Gastrocnemius medialis (tissue), 4 donors: ENCODE measurements at regions of chr3 and their contacts with region 1.

Region 1: GRCh38 chr3:53303957-53304356 is 43.4 kb downstream of the DCP1A start:
- DNase-seq: no peak
- ATAC-seq: no peak
- H3K4me3 ChIP-seq: no peak overlapping the region
- H3K27ac ChIP-seq: peak overlapping the region; percentile 71 to 81 (median 76)
- H3K4me1 ChIP-seq: peaks cover 10 to 19% of the 10 kb centered on the region in 2 donors
- H3K27me3 ChIP-seq: no peaks in the 10 kb centered on the region
- CTCF ChIP-seq: no peak
- POLR2A ChIP-seq: no peak

Region 2: DNA sequence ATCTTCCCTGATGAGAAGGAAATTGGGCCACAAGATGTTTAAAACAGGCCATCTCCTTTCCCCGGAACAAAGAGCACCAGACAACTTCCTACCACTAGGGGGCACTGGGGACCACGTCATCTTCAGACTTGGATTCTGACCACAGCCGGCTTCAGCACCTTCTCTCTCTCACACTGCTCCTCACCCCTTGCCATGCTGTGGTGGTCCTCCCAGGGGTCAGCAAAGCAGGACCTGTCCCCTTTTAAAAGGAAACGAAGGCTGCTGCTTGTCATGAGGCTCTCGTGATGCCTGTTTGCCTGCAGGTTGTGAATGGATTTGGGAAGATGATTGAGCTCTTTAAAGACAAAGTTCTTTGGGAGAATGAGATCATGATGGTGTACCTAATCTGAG is 190.0 kb before region 1 on chr3:
- in situ Hi-C with region 1: no loop called
- intact Hi-C with region 1: loop called (anchors 5 kb)
- DNase-seq: peak; percentile 65 to 73
- ATAC-seq: peak; percentile 89 to 90
- H3K4me3 ChIP-seq: no peak overlapping the region
- H3K27ac ChIP-seq: peak overlapping the region; percentile 62 to 76 (median 72)
- H3K4me1 ChIP-seq: peaks cover 26 to 31% of the 10 kb centered on the region in 2 donors
- H3K27me3 ChIP-seq: no peaks in the 10 kb centered on the region
- CTCF ChIP-seq: peak; percentile 86 to 94 (median 93)
- POLR2A ChIP-seq: no peak

Region 3: DNA sequence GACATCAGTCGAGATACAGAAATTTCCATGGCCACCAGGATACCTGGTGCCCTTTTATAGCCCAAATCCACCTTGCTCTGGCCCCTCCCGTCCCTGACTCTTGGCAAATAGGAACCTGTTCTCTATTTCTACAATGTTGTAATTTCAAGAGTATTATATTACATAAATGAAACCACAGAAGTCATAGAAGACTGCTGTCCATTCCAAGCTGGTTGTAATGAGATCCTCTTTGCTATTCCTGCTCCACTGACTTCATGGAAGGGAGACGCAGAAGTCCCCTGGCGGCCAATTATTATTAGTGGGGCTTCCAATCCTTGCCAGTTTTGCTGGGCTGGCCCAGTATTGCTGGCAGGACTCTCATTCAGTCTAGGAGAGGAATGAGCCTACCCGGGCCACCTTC is 16.7 kb after region 1 on chr3:
- in situ Hi-C with region 1: no loop called
- intact Hi-C with region 1: loop called (anchors 2 kb)
- DNase-seq: peak; percentile 48 to 85
- ATAC-seq: peak; percentile 99
- H3K4me3 ChIP-seq: no peak overlapping the region
- H3K27ac ChIP-seq: peak overlapping the region; percentile 81 to 86 (median 82)
- H3K4me1 ChIP-seq: peaks cover 50 to 60% of the 10 kb centered on the region in 2 donors
- H3K27me3 ChIP-seq: no peaks in the 10 kb centered on the region
- CTCF ChIP-seq: peak; percentile 51 to 63 (median 58)
- POLR2A ChIP-seq: no peak

Region 4: DNA sequence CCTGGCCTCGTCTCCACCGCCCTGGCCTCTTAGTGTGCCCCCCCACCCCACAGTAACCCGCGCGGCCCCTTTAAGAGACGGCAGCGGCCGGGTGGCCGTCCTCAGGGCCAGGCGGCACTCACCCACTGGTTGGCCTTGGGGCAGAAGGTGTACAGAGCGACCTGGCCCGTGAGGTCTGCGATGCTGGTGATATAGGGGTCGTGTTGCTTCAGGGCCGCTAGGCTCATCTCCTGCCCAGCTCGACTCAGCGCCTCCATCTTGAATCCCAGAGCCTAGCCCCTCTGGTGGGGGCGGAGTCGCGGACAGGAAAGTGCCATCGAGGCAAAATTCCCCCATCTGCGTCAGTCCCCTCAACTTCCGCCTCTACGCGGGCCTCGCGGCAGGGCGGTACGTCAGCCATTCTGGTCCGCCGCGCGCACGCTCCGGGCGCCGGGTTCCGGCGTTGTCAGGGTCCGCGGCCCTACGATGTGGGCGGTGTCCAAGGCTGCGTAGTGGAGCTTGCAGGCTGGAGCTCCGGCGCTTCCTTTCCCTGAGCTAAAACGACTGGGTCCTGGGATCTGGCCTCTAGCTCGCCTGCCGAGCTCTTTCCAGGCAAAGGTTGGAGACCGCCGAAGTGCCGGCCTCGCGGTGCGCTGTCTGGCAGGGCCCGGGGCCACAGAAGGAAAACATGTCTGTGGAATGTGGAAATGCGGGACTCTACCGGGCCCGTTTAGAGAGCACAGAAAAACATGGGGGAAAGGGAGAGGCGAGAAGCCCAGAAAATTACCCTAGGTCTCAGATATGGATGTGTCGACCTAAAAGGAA is 43.5 kb after region 1 on chr3 and contains the start of gene DCP1A:
- in situ Hi-C with region 1: no loop called
- intact Hi-C with region 1: loop called (anchors 2 kb)
- DNase-seq: peak; percentile 92 to 94
- ATAC-seq: peak; percentile 98
- H3K4me3 ChIP-seq: peak within 1 kb of the TSS; percentile 93 to 99 (median 98)
- H3K27ac ChIP-seq: peak within 1 kb of the TSS; percentile 97 to 99 (median 98)
- H3K4me1 ChIP-seq: peaks cover 9 to 30% of the 10 kb centered on the region in 2 donors
- H3K27me3 ChIP-seq: no peaks in the 10 kb centered on the region
- CTCF ChIP-seq: peak in 1 of 5 experiments; percentile 17
- POLR2A ChIP-seq: peak; percentile 87 to 88
- total RNA-seq, gene DCP1A: 10.9 to 18.4 (median 15.2) TPM

Region 5: DNA sequence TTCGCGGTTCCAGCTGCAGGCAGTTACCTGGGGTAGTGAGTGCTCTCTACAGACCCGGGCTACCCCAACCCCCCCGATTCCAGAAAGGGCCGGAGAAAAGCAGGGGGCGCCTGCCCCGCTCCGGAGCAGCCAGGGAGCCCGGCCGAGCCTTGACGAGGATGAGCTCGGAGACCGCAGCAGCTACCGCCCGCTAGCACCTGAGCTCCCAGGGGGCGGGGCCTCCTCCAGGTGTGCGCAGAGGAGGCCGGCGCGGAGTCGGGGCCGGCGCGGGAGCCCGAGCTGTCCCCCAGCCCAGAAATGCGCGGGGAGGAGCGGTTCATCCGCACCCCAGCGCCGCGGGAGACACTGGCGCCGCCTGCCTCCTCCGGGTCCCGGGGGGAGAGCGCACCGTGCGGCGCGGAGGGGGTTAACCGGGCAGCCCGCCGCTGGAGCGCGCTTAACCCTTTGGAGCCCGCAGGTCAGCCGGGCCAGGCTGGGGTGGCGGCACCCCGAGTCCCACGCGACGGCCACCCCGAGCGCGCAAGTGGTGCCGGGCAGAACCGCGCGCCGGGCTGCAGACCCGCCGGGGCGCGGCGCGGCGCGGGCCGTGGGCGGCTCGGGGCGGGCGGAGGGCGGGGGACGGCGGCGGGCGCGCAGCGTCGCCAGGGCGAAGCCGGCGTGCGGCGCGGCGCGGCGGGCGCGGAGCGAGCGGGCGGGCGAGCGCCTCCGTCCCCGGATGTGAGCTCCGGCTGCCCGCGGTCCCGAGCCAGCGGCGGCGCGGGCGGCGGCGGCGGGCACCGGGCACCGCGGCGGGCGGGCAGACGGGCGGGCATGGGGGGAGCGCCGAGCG is 190.2 kb after region 1 on chr3 and contains the start of gene CACNA1D:
- in situ Hi-C with region 1: no loop called
- intact Hi-C with region 1: loop called (anchors 10 kb)
- DNase-seq: no peak
- ATAC-seq: no peak
- H3K4me3 ChIP-seq: peak within 1 kb of the TSS; percentile 39 to 43 (median 40)
- H3K27ac ChIP-seq: no peak within 1 kb of the TSS
- H3K4me1 ChIP-seq: peaks cover 7 to 16% of the 10 kb centered on the region in 2 donors
- H3K27me3 ChIP-seq: peaks cover 23 to 36% (median 35%) of the 10 kb centered on the region in 3 donors
- CTCF ChIP-seq: no peak
- POLR2A ChIP-seq: no peak
- total RNA-seq, gene CACNA1D: 0.18 to 0.34 TPM in 2 of 4 donors, not detected in the others

Region 6: GRCh38 chr3:53680028-53680427 is 376.1 kb after region 1 on chr3:
- in situ Hi-C with region 1: no loop called
- intact Hi-C with region 1: loop called (anchors 10 kb)
- DNase-seq: no peak
- ATAC-seq: no peak
- H3K4me3 ChIP-seq: no peak overlapping the region
- H3K27ac ChIP-seq: no peak overlapping the region
- H3K4me1 ChIP-seq: peaks cover 20 to 22% of the 10 kb centered on the region in 2 donors
- H3K27me3 ChIP-seq: no peaks in the 10 kb centered on the region
- CTCF ChIP-seq: no peak
- POLR2A ChIP-seq: no peak